H1 (cell line): ENCODE measurements at regions of chr6 and their contacts with region 1.

Region 1: DNA sequence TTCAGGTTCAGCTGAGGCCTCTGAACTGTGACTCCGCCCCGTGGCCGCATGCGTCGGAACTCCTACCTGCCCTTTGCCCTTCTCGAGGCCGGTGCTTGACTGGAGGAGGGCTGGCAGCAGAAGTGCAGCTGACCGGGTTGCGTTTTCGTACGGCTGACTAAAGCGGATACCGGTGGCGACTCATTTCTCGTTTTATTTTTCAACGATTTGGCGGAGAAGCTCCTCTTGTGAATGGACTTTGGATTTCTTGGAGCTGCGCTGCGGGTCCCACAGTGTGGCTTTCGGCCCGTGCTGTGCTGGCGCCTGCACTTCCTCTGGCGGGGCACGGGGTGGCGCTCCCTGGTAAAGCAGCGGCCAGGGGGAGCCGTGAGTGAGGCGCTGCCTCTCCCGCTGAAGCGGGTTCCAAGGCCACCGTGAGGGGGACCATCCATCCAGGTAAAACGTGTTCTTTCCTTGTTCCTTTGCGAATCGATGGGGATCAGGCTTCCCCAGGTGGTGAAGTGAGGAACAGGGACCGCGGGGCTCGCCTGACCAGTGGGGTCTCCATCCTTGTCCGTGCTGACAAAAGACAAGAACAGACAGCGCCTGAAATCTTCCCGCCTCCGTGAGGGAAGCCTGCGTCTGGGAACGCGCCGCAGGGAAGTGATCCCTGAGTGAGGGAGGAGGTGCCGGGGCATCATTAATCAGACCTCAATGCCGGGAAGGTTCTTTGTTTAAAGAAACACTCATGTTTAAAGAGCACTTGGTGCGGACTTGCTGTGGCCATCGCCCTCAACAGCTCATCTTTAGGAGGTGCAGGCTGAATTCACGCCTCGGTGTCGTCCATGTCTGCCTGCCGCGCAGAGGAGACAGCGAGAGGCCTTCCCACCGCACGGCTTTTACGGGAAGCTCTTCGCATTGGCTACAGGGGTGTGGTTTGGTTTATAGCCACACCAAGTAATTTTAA is 38.8 kb downstream of the ERMARD start:
- DNase-seq: peak; percentile 56 to 90
- H3K4me3 ChIP-seq: peak overlapping the region; percentile 5 to 51 (median 33); a peak in 7 of 8 replicates
- H3K27ac ChIP-seq: no peak overlapping the region
- H3K4me1 ChIP-seq: peaks cover 0 to 12% (median 4%) of the 10 kb centered on the region in 4 experiments; a peak in 5 of 7 replicates
- H3K27me3 ChIP-seq: peaks cover 0 to 12% (median 4%) of the 10 kb centered on the region in 4 experiments; a peak in 4 of 7 replicates
- CTCF ChIP-seq: peak; percentile 91 to 98 (median 96)
- EP300 ChIP-seq: 0 out of 3 replicates have a peak, but pooled peaks of 1 of the 2 experiments have one; percentile 14
- POLR2A ChIP-seq: peak in 1 of 2 experiments; percentile 45; a peak in 2 of 3 replicates
- RAD21 ChIP-seq: peak; percentile 95 to 96

Region 2: DNA sequence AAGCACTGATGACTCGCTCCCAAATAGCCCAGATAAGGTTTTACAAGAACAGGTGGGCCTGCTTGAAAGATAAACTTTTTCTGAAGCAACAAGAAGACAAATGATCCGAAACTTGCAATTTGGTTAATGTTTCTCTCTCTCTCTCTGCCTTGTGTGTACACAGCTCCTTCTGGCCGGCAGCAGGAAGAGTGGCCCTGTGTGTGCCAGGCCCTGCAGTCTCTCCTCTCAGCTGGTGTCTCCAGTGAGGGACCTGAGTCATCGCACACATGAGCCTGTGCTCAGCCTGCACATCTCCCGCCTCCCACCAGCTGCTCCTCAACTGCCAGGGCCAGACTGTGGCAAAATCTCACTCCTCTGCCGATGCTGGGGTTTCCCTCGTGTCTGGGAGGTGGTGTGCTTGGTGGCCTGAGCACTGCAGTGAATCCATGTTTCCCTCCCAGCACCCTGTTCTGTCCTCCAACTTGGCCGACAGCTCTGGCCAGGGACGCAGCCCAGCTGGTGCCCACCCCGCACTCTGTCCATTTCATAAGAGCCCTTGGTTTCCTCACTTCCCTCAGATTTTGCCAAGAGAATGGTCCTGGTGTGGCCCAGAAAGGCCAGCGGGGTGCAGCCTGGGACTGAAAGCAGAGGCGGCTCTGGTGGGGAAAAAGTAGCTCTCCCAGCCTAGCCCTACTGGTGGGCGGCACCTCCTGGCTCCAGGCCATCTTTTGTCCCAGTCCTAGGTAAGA is 10.6 kb after region 1 on chr6:
- CTCF ChIA-PET with region 1: interaction called, 64 read pairs
- POLR2A ChIA-PET with region 1: interaction called, 7 read pairs
- DNase-seq: peak in 1 of 2 experiments; percentile 44
- H3K4me3 ChIP-seq: no peak overlapping the region
- H3K27ac ChIP-seq: no peak overlapping the region
- H3K4me1 ChIP-seq: peaks cover 0 to 10% (median 2%) of the 10 kb centered on the region in 4 experiments; a peak in 4 of 7 replicates
- H3K27me3 ChIP-seq: peaks cover 0 to 2% (median 0%) of the 10 kb centered on the region in 4 experiments; a peak in 2 of 7 replicates
- CTCF ChIP-seq: no peak
- EP300 ChIP-seq: no peak
- POLR2A ChIP-seq: no peak
- RAD21 ChIP-seq: peak; percentile 18 to 20

Region 3: GRCh38 chr6:169810066-169810989 is 20.1 kb after region 1 on chr6:
- CTCF ChIA-PET with region 1: interaction called, 64 read pairs
- POLR2A ChIA-PET with region 1: interaction called, 4 read pairs
- DNase-seq: peak in 1 of 2 experiments; percentile 76
- H3K4me3 ChIP-seq: no peak overlapping the region
- H3K27ac ChIP-seq: no peak overlapping the region
- H3K4me1 ChIP-seq: peaks cover 0 to 9% (median 3%) of the 10 kb centered on the region in 4 experiments; a peak in 4 of 7 replicates
- H3K27me3 ChIP-seq: peaks cover 0 to 3% (median 0%) of the 10 kb centered on the region in 4 experiments; a peak in 1 of 7 replicates
- CTCF ChIP-seq: no peak
- EP300 ChIP-seq: no peak
- POLR2A ChIP-seq: no peak
- RAD21 ChIP-seq: no peak

Region 4: GRCh38 chr6:170529839-170530469 is 739.7 kb after region 1 on chr6:
- CTCF ChIA-PET with region 1: interaction called, 10 read pairs
- POLR2A ChIA-PET with region 1: no interaction called
- DNase-seq: peak in 1 of 2 experiments; percentile 82
- H3K4me3 ChIP-seq: no peak overlapping the region
- H3K27ac ChIP-seq: no peak overlapping the region
- H3K4me1 ChIP-seq: no peaks in the 10 kb centered on the region
- H3K27me3 ChIP-seq: no peaks in the 10 kb centered on the region
- CTCF ChIP-seq: peak; percentile 76 to 93 (median 83)
- EP300 ChIP-seq: no peak
- POLR2A ChIP-seq: no peak
- RAD21 ChIP-seq: peak; percentile 95 to 96